A549 (cell line): ENCODE measurements at regions of chr17 and their contacts with region 1.

Region 1: DNA sequence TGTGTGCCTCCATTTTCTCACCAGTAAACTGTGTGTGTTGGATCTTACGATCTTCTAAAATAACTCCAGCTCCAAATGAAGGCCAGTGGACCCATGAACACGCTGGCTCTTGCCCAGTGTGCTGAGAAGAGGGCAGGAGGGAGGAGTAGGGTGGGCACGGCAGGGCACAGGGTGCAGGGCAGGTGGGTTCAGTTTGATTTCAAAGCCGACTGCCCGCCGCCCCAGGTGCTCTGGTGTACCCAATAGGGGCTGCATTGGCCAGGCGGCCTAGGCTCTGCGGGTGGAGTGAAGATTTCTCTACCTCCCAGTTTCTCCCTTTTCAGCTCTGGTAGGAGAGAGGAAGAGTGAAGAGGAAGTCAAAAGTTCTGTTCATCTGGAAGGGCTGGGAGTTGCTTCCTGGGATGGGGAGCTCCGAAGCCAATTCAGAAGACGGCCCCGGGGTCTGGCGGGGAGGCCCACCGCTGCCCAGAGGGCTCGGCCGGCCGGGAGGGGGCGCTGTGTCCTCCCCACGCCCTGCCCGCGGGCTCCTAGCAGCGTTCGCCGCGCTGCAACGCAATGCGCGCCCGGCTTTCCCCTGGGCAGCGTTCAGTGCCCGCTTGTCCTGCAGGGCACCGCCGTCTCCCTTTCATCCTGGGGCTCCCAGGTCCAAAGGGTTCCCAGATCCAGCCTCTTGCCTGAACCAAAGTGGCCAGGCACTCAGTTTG is 1.1 kb upstream of the CRHR1 start:
- DNase-seq: peak; percentile 58 to 76
- ATAC-seq: peak; percentile 64 to 89
- H3K4me3 ChIP-seq: peak overlapping the region; percentile 50
- H3K27ac ChIP-seq: peak overlapping the region in 1 of 2 experiments; percentile 75; a peak in 2 of 6 replicates
- H3K4me1 ChIP-seq: peaks cover 5% of the 10 kb centered on the region; the same call in 1 of the 3 replicates
- CTCF ChIP-seq: peak; percentile 79
- EP300 ChIP-seq: no peak
- POLR2A ChIP-seq: no peak
- RAD21 ChIP-seq: peak; percentile 24 to 38; a peak in 3 of 5 replicates

Region 2: GRCh38 chr17:45660474-45660873 is 122.6 kb before region 1 on chr17:
- CTCF ChIA-PET with region 1: interaction called, 11 read pairs
- POLR2A ChIA-PET with region 1: no interaction called
- DNase-seq: no peak
- ATAC-seq: no peak
- H3K4me3 ChIP-seq: no peak overlapping the region
- H3K27ac ChIP-seq: no peak overlapping the region
- H3K4me1 ChIP-seq: no peaks in the 10 kb centered on the region
- CTCF ChIP-seq: no peak
- EP300 ChIP-seq: no peak
- POLR2A ChIP-seq: no peak
- RAD21 ChIP-seq: no peak

Region 3: DNA sequence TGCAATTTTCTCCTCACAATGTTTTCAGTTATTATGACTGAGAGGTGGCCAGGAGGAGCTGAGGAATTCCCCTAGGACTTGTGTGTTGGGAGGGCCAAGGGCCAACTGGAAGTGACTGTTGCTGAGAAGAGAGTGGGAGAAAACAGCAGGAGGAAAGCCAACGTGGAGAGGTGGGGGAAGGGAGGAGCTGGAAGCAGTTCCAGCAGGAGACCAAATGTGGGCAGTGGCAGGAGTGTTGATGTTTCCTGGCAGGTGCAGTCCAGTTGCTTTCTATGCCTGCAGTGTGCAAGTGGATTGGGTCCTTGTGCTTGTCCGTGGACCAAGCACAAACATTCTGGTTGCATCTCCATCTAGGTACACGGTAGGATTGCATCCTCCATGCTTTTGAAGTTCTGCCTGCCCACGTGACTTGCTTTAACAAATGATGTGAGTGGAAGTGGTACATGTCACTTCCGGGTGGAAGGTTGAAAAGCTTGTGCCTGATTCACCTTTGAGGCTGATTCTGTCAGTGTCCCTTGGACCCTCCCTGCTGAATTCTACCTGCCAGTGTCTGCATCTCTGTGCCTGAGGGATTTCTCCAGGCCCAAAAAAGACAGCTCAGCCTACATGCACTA is 53.6 kb before region 1 on chr17:
- CTCF ChIA-PET with region 1: interaction called, 18 read pairs
- POLR2A ChIA-PET with region 1: no interaction called
- DNase-seq: no peak
- ATAC-seq: no peak
- H3K4me3 ChIP-seq: no peak overlapping the region
- H3K27ac ChIP-seq: no peak overlapping the region
- H3K4me1 ChIP-seq: no peaks in the 10 kb centered on the region
- CTCF ChIP-seq: no peak
- EP300 ChIP-seq: no peak
- POLR2A ChIP-seq: no peak
- RAD21 ChIP-seq: no peak

Region 4: GRCh38 chr17:45770632-45771270 is 12.3 kb before region 1 on chr17:
- CTCF ChIA-PET with region 1: interaction called, 64 read pairs
- POLR2A ChIA-PET with region 1: interaction called, 4 read pairs
- DNase-seq: no peak
- ATAC-seq: no peak
- H3K4me3 ChIP-seq: no peak overlapping the region
- H3K27ac ChIP-seq: no peak overlapping the region
- H3K4me1 ChIP-seq: peaks cover 7% of the 10 kb centered on the region
- CTCF ChIP-seq: no peak
- EP300 ChIP-seq: no peak
- POLR2A ChIP-seq: no peak
- RAD21 ChIP-seq: no peak

Region 5: DNA sequence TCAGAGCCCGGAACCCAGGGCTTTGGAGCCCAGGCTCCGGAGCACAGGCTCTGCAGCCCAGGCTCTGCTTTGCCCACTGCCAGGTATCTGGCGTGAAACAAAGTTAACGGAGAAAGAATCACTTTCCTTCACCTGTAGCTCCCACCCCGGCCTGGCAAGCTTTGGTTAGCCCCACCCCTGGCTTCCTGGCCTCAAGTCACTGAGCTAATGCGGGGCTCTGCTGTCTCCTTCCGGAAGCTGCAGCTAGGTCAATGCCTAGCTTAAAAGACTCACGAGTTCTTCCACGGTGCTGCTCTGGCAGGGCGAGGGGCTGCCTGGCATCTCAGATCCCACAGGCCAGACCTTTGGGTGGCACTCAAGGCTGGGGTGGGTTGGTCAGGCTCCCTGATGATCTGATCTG is 40.6 kb after region 1 on chr17:
- CTCF ChIA-PET with region 1: interaction called, 14 read pairs
- POLR2A ChIA-PET with region 1: no interaction called
- DNase-seq: no peak
- ATAC-seq: no peak
- H3K4me3 ChIP-seq: no peak overlapping the region
- H3K27ac ChIP-seq: no peak overlapping the region
- H3K4me1 ChIP-seq: no peaks in the 10 kb centered on the region
- CTCF ChIP-seq: no peak
- EP300 ChIP-seq: no peak
- POLR2A ChIP-seq: no peak
- RAD21 ChIP-seq: no peak

Region 6: GRCh38 chr17:45852535-45853297 is 69.7 kb after region 1 on chr17:
- CTCF ChIA-PET with region 1: interaction called, 32 read pairs
- POLR2A ChIA-PET with region 1: no interaction called
- DNase-seq: peak; percentile 57 to 70
- ATAC-seq: peak; percentile 25 to 73; a peak in 4 of 6 replicates
- H3K4me3 ChIP-seq: peak overlapping the region; percentile 14; the same call in 1 of the 3 replicates
- H3K27ac ChIP-seq: peak overlapping the region in 1 of 2 experiments; percentile 61; a peak in 1 of 6 replicates
- H3K4me1 ChIP-seq: 0 out of 3 replicates have a peak, but pooled peaks cover 2% of the 10 kb centered on the region
- CTCF ChIP-seq: peak; percentile 97
- EP300 ChIP-seq: no peak
- POLR2A ChIP-seq: no peak
- RAD21 ChIP-seq: peak; percentile 94 to 95